ENCODE measurements at regions of chr5 and their contacts with region 1.

Region 1: GRCh38 chr5:141040771-141041426 is 10.3 kb upstream of the PCDHB1 start:
- DNase-seq: peak; percentile 92 to 99 (median 98)

Region 2: GRCh38 chr5:140868721-140869554 is 172.0 kb before region 1 on chr5 and contains the start of gene PCDHA11:
- intact Hi-C with region 1: loop called (anchors 5 kb)
- DNase-seq: peak in 20 of 42 donors; percentile 16 to 65 (median 36)

Region 3: GRCh38 chr5:140882591-140882899 is 158.4 kb before region 1 on chr5:
- intact Hi-C with region 1: loop called (anchors 5 kb)
- DNase-seq: peak in 16 of 42 donors; percentile 4 to 79 (median 31)

Region 4: DNA sequence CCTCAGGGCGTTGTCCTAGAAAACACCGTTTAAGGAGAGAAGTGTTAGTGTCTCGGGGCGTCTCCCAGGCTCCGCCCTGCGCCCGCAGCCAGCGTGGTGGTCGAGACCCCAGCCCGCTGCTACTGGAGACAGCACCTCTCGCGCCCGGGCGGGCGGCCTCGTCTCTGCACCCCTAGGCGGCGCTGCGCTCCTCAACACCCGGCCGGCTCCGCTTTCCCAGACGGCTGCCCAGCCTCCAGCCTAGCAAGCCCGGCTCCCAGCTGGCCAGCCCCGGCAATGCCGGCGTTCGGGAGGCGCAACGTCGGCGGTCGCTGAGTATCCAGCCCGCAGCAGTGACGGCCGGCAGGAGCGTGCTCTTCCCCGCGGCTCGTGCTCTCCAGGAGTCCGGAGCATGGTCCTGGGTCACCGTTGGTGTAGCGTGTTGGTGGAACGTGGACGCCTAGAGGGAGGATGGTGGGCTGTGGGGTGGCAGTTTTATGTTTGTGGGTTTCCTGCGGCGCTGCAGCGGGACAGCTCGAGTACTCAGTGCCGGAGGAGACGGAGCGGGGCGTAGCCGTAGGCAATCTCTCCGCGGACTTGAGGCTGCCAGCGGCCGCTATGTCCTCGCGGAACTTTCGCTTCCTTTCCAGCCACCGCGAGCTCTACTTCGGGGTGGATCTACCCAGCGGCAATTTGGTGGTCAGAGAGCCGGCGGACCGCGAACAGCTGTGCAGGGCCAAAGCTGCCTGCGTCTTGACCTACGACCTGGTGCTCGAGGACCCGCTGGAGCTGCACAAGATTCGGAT is 114.3 kb before region 1 on chr5:
- intact Hi-C with region 1: loop called (anchors 2 kb)
- DNase-seq: peak; percentile 70 to 93 (median 85)

Region 5: DNA sequence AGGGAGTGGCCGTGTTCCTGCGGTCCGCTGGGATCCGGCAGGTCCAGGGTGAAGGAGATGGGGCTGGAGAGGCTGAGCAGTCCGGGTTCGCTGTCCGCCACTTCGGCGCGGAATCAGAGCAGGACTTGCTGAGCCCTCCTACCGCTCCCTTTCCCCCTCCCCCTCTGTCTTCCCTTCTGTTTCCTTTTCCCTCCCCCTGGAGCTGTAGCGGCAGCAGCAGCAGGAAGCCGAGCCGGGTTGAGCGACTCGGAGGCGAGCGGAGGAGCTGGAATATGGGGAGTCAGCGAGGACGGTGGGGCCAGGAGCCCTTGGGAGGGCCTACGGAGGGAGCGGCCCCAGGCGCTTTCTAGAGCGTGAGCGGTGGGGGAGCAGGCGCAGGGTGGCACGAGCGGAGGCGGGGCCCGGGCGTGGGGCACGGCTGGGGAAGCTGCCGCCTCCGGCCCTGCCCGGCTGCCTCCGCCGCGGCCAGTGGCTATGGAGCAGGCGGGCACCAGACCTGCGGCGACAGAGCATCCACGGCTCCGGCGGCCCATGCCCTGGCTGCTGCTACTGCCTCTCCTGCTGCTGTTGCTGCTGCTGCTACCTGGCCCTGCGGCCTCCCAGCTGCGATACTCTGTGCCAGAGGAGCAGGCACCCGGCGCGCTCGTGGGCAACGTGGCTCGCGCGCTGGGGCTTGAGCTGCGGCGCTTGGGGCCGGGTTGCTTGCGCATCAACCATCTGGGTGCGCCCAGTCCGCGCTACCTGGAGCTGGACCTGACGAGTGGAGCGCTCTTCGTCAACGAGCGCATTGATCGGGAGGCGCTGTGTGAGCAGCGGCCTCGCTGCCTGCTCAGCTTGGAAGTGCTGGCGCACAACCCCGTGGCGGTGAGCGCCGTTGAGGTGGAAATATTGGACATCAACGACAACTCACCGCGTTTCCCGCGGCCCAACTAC is 74.3 kb before region 1 on chr5 and contains the start of gene PCDHAC2:
- intact Hi-C with region 1: loop called (anchors 2 kb)
- DNase-seq: peak; percentile 28 to 88 (median 76)

Measured in head of caudate nucleus (tissue), 42 donors.